PC-9 (cell line): ENCODE measurements at regions of chr2 and their contacts with region 1.

Region 1: GRCh38 chr2:215311625-215312396 is at the start of gene ATIC:
- DNase-seq: peak; percentile 94 to 97
- H3K4me3 ChIP-seq: peak within 1 kb of the TSS; percentile 88
- H3K27ac ChIP-seq: peak within 1 kb of the TSS; percentile 68
- H3K4me1 ChIP-seq: peaks cover 43% of the 10 kb centered on the region
- H3K27me3 ChIP-seq: no peaks in the 10 kb centered on the region
- CTCF ChIP-seq: no peak
- total RNA-seq, gene ATIC: 285 and 290 TPM in 2 replicates

Region 2: GRCh38 chr2:215188078-215188477 is 123.7 kb before region 1 on chr2:
- CTCF ChIA-PET with region 1: no interaction called
- POLR2A ChIA-PET with region 1: no interaction called
- intact Hi-C with region 1: no loop called
- DNase-seq: no peak
- H3K4me3 ChIP-seq: no peak overlapping the region
- H3K27ac ChIP-seq: no peak overlapping the region
- H3K4me1 ChIP-seq: no peaks in the 10 kb centered on the region
- H3K27me3 ChIP-seq: no peaks in the 10 kb centered on the region
- CTCF ChIP-seq: no peak

Region 3: GRCh38 chr2:215299337-215299859 is 12.4 kb before region 1 on chr2:
- CTCF ChIA-PET with region 1: no interaction called
- POLR2A ChIA-PET with region 1: interaction called, 9 read pairs
- intact Hi-C with region 1: loop called (anchors 1 kb)
- DNase-seq: no peak
- H3K4me3 ChIP-seq: no peak overlapping the region
- H3K27ac ChIP-seq: no peak overlapping the region
- H3K4me1 ChIP-seq: no peaks in the 10 kb centered on the region
- H3K27me3 ChIP-seq: no peaks in the 10 kb centered on the region
- CTCF ChIP-seq: no peak

Region 4: GRCh38 chr2:215430528-215431187 is 118.8 kb after region 1 on chr2:
- CTCF ChIA-PET with region 1: no interaction called
- POLR2A ChIA-PET with region 1: interaction called, 34 read pairs
- intact Hi-C with region 1: loop called (anchors 2 kb)
- DNase-seq: no peak
- H3K4me3 ChIP-seq: no peak overlapping the region
- H3K27ac ChIP-seq: no peak overlapping the region
- H3K4me1 ChIP-seq: 0 out of 2 replicates have a peak, but pooled peaks cover 3% of the 10 kb centered on the region
- H3K27me3 ChIP-seq: no peaks in the 10 kb centered on the region
- CTCF ChIP-seq: no peak

Region 5: DNA sequence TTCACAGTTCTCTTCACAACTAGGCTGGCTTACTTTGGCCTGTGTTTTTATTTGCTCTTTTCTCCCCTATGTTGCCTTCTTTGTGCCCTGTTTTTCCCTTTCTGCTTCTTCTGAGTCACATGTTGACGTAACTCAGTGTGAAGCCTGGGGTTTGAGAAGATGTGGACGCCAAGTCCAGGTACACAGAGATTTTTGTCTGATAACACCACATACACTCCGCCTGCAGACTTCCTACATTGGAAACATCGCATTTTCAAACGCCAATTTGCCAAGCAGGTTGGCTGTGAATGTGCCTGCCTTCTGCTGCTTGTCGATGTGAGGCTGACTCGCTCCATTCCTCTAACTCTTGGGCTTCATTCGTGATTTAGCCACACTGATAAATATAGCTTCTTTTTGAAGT is 186.6 kb after region 1 on chr2:
- CTCF ChIA-PET with region 1: interaction called, 4 read pairs
- POLR2A ChIA-PET with region 1: interaction called, 12 read pairs
- intact Hi-C with region 1: no loop called
- DNase-seq: peak in 1 of 2 experiments; percentile 38
- H3K4me3 ChIP-seq: no peak overlapping the region
- H3K27ac ChIP-seq: no peak overlapping the region
- H3K4me1 ChIP-seq: no peaks in the 10 kb centered on the region
- H3K27me3 ChIP-seq: no peaks in the 10 kb centered on the region
- CTCF ChIP-seq: no peak